ENCODE measurements at regions of chr1 and their contacts with region 1.

Region 1: DNA sequence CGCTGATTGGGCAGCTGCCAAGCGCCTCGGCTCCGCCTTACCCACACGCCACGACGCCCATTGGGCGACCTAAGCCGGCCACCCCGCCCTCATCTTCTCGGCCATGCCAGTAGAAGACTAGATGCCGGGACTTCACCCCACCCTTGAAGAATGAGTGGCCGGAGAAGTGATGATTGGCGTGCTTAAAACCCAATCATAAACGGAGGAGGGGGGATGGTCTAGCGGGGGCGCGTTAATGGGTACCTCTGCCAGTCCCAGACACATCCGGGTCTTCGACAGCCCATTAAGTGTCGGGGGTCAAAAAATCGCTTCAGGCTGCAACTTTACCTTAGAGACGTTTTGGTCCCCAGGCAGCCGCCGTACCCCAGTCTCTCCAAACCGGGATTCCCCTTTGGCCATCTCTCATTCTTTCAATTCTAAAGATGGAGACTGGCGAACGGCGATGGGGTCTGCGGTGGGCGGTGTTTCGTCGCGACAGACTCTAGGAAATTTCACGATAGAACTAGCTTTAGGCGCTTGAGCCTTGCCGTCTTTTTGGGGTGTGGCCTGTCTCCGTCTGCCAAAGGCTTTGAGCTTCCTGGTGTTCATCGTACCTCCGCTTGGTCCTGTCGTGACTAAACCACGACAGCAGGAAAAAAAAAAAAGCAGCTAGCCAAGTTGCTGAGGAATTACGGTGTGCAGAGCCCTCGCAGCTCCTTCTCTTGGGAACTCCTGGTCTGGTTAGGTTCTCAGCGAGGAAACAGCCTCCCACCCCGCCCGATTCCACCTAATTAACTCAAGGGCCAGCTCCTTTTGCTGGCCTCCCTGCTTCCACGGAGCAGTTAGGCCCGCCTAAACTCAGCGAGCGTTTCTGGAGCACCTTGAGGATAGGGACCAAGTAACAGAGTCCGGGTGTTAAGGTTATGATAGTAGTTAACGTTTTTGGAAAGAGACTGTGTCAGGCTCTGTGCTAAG is at the start of gene GATAD2B:
- DNase-seq: peak; percentile 96
- H3K4me3 ChIP-seq: peak within 1 kb of the TSS; percentile 74 to 90
- H3K27ac ChIP-seq: peak within 1 kb of the TSS; percentile 85 to 95
- H3K4me1 ChIP-seq: peaks cover 17 to 25% of the 10 kb centered on the region in 2 experiments
- H3K27me3 ChIP-seq: no peaks in the 10 kb centered on the region
- CTCF ChIP-seq: no peak
- EP300 ChIP-seq: 0 out of 4 replicates have a peak, but pooled peaks of 1 of the 2 experiments have one; percentile 20
- RAD21 ChIP-seq: peak; percentile 41
- polyA plus RNA-seq, gene GATAD2B: 2.7 and 2.8 TPM in 2 replicates

Region 2: DNA sequence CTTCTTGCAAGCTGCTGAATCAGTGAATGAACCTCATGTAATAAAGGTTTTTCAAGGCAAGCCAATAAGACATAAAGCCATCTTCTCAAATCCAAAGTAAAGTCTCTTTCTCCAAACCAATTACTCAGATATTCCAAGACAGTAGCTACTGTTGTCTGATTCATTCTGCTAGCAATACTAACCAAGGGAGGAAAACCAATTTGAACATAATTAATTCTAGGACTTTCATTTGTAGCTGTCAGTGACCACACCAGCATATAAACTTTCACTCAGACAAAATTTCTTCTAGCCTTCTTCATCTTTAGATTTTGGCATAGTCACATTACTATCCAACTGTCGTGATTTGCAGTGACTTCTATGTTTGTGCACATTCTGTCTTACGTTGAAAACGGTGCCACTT is 205.9 kb before region 1 on chr1:
- CTCF ChIA-PET with region 1: no interaction called
- POLR2A ChIA-PET with region 1: no interaction called
- DNase-seq: no peak
- H3K4me3 ChIP-seq: no peak overlapping the region
- H3K27ac ChIP-seq: no peak overlapping the region
- H3K4me1 ChIP-seq: no peaks in the 10 kb centered on the region
- H3K27me3 ChIP-seq: no peaks in the 10 kb centered on the region; the same call in 1 of the 2 replicates
- CTCF ChIP-seq: no peak
- EP300 ChIP-seq: no peak
- RAD21 ChIP-seq: no peak

Region 3: DNA sequence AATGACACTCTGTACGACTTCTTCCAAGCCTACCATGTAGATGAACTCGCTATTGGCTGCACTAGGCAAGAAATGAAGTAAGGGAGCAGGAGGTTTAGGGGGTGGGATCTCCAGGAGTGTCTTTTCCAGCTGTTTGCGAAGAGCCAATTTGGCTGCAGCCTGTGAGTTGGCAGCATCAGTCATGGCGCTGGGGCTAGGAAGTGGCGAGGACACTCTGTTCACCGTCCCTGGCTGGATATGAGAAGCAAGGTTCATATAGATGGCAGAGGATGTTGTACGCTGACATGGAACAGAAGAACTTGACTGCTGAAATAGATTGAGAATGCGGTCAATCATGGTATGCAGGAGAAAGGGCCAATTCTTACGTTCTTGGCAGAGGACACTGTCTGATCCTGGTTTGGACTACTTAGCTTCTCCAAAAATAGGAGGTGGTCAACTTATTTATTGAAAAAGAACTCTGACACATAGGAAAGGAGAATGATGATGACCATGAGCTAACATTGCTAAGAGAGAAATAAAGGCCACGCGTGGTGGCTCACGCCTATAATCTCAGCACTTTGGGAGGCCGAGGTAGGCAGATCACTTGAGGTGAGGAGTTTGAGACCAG is 106.9 kb before region 1 on chr1:
- CTCF ChIA-PET with region 1: interaction called, 10 read pairs
- POLR2A ChIA-PET with region 1: interaction called, 5 read pairs
- DNase-seq: no peak
- H3K4me3 ChIP-seq: no peak overlapping the region
- H3K27ac ChIP-seq: no peak overlapping the region
- H3K4me1 ChIP-seq: no peaks in the 10 kb centered on the region
- H3K27me3 ChIP-seq: no peaks in the 10 kb centered on the region
- CTCF ChIP-seq: no peak
- EP300 ChIP-seq: no peak
- RAD21 ChIP-seq: no peak

Region 4: DNA sequence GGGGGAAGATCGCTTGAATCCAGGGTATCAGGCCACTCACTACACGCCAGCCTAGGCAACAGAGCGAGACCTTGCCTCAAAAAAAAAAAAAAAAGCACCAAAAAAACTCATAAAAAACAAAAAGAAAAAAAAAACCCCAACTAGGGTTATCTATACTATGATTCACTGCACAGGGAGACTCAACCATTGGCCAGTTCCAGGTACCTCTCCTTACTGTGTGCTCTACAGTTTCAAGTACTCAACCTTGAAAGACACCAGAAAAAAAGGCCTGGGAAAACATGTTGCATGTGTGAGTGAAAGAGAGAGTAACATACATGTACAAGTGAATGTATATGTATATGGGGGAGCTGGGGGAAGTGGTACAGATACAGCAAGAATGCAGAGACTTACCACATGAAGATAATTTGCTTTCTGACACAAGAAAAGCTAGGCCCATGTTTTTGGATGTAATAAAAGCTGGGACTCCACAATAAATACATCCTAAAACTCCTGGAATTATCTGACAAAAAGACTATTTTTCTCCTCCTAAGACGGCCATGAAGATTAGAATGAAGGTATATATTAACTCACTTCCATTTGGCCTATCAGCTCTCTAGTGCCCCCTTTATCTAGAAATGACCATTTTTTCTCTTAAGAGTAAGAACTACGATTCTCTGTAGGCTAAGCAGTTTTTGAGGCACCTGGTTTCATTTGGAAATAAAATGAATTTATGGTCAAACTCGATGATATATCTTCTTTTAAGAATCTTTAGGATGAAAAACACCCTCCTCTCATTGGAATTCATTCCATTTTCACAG is 95.9 kb before region 1 on chr1:
- CTCF ChIA-PET with region 1: interaction called, 10 read pairs
- POLR2A ChIA-PET with region 1: no interaction called
- DNase-seq: no peak
- H3K4me3 ChIP-seq: no peak overlapping the region
- H3K27ac ChIP-seq: no peak overlapping the region
- H3K4me1 ChIP-seq: no peaks in the 10 kb centered on the region
- H3K27me3 ChIP-seq: no peaks in the 10 kb centered on the region
- CTCF ChIP-seq: peak; percentile 35; the same call in 1 of the 2 replicates
- EP300 ChIP-seq: no peak
- RAD21 ChIP-seq: no peak

Region 5: DNA sequence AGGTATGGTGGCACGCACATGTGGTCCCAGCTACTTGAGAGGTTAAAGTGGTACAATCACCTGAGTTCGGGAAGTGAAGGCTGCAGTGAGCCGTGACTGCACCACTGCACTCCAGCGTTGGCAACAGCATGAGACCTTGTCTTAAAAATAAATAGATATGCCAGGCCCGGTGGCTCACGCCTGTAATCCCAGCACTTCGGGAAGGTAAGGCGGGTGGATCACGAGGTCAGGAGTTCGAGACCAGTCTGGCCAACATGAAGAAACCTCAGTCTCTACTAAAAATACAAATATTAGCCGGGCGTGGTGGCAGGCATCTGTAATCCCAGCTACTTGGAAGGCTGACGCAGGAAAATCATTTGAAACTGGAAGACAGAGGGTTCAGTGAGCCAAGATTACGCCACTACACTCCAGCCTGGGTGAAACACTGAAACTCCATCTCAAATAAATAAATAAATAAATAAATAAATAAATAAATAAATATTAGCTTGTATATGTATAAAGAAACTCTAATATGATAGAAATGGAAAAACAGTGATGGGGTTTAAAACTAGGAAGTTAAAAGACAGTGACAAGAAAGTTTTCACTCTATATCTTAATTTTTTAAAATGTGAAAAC is 19.3 kb before region 1 on chr1:
- CTCF ChIA-PET with region 1: interaction called, 10 read pairs
- POLR2A ChIA-PET with region 1: no interaction called
- DNase-seq: no peak
- H3K4me3 ChIP-seq: no peak overlapping the region
- H3K27ac ChIP-seq: no peak overlapping the region
- H3K4me1 ChIP-seq: no peaks in the 10 kb centered on the region
- H3K27me3 ChIP-seq: no peaks in the 10 kb centered on the region
- CTCF ChIP-seq: no peak
- EP300 ChIP-seq: no peak
- RAD21 ChIP-seq: no peak